ENCODE measurements at regions of chr1 and their contacts with region 1.

Region 1: DNA sequence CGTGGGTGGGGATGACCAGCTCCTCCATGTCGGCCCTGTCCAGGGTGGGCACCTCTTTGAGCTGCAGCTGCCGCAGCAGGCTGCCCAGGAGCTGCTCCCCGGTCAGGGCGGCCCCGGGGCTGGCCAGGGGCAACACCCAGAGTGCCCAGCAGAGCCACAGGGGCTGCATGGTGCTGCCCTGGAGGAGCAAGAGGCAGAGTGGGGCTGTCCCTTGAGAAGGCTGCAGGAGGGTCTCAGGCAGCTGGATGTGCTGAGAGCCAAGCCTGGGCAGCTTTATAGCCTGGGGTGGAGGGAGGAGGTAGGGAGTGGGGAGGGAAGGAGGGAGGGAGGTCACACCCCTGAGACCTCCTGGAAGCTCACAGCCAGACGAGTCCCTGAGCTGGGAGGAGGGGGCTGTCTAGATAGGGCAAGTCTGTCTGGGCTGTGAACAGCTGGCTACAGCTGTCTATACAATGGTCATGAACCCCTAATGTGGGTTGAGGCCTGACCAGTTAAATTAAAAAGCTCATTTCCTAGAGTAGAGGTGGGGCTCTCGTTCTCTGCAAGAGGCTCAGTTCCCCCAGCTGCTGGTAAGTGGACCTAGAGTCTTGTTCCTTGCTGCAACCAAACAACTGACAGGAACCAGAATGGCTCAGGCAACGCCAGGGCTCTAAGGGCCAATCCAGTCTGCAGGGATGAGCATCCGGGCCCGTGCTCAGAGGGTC is at the start of gene LEFTY1:
- H3K4me3 ChIP-seq: no peak within 1 kb of the TSS
- H3K27ac ChIP-seq: no peak within 1 kb of the TSS
- H3K4me1 ChIP-seq: no peaks in the 10 kb centered on the region
- CTCF ChIP-seq: no peak

Region 2: DNA sequence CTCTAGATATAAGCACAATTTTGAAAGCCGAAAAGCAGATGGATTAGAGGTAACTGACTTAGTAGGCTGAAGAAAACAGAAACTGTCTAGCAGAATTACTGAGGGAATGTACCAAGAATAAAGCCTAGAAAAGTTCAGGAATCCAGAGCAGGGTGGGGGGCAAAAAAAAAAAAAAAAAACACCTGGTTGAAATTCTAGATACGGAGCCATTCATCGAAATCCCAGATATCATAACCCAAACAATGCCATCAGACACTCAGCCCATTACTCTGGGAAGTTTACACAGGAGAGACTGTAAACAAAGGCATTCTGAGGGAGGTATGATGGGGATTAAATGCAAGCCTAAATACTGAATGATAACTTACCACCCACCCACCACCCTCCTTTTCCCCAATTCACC is 281.7 kb before region 1 on chr1:
- CTCF ChIA-PET with region 1: no interaction called
- POLR2A ChIA-PET with region 1: interaction called, 10 read pairs
- H3K4me3 ChIP-seq: no peak overlapping the region
- H3K27ac ChIP-seq: 0 out of 2 replicates have a peak overlapping the region, but pooled peaks have one; percentile 0
- H3K4me1 ChIP-seq: peaks cover 52% of the 10 kb centered on the region
- CTCF ChIP-seq: no peak

Region 3: GRCh38 chr1:225950905-225951497 is 62.0 kb after region 1 on chr1:
- CTCF ChIA-PET with region 1: no interaction called
- POLR2A ChIA-PET with region 1: no interaction called
- H3K4me3 ChIP-seq: no peak overlapping the region
- H3K27ac ChIP-seq: no peak overlapping the region
- H3K4me1 ChIP-seq: no peaks in the 10 kb centered on the region
- CTCF ChIP-seq: no peak

Region 4: DNA sequence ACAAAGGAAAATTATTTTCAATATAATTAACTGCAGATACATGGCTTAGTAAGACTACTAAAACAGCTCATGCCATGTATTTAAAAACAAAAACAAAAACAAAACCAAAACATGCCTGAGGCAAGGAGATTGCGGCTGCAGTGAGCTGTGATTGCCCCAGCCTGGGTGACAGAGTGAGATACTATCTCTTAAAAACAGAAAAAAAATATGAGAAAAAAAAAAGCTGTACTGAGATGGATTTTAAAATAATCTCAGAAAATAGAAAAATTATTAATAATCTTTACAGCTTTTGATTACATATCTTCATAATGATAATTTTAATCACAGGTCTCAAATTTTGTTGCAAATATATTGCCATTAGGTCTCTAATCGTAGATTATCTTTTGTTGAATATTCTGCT is 443.9 kb after region 1 on chr1:
- CTCF ChIA-PET with region 1: no interaction called
- POLR2A ChIA-PET with region 1: no interaction called
- H3K4me3 ChIP-seq: peak overlapping the region; percentile 25; the same call in 1 of the 2 replicates
- H3K27ac ChIP-seq: no peak overlapping the region
- H3K4me1 ChIP-seq: peaks cover 3% of the 10 kb centered on the region; the same call in 1 of the 2 replicates
- CTCF ChIP-seq: no peak

Measured in HEK293 (cell line).